Activated naive CD4-positive, alpha-beta T cell treated with anti-CD3 and anti-CD28 coated beads for 36 hours (primary cell): ENCODE measurements at regions of chr11 and their contacts with region 1.

Region 1: GRCh38 chr11:1837171-1838076 is 1.4 kb upstream of the TNNI2 start:
- DNase-seq: peak; percentile 77
- H3K4me3 Mint-ChIP-seq: no peak overlapping the region
- H3K27ac Mint-ChIP-seq: no peak overlapping the region
- H3K4me1 Mint-ChIP-seq: no peaks in the 10 kb centered on the region
- H3K27me3 Mint-ChIP-seq: no peaks in the 10 kb centered on the region

Region 2: DNA sequence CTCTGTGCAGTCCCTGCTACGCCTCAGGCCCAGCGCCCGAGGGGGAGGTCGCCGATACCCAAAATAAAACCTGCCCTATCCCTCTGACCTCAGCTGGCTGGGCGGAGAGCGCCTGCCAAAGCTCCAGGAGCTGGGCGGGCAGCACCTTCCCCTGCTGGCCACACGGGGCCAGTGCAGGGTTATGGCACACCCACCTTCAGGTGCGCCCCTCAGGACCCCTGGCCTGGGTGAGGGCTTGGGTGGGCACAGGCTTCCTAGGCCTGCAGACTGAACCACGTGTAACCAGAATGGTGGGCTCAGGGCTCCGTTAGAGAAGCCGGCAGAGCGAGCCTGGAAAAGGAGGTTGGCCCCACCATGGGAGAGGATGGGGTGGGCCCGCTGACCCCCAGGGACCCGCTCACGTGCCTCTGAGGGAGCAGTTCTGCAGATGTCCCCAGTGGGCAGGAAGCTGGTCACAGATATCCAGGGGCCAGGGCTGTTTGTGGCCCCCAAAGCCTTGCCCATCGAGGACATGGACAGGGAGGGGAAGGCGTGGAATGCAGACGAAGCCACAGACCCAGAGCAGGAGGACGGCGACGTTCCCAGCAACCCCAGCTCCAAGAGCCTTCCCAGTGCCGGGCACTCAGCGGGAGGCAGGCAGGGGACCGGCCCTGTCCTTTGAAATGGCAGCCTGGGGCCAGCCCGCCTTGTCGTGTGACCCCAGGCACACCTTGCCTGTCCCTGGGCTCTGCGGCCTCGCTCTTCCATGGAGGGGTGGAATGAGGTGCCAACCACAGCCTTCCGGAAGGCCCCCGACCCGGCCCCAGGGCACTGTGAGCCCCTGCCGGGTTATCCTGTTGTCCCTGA is 80.5 kb after region 1 on chr11:
- CTCF ChIA-PET with region 1: interaction called, 13 read pairs
- intact Hi-C with region 1: loop called (anchors 1 kb)
- DNase-seq: no peak
- H3K4me3 Mint-ChIP-seq: no peak overlapping the region
- H3K27ac Mint-ChIP-seq: no peak overlapping the region
- H3K4me1 Mint-ChIP-seq: peaks cover 11% of the 10 kb centered on the region
- H3K27me3 Mint-ChIP-seq: peaks cover 3% of the 10 kb centered on the region

Region 3: DNA sequence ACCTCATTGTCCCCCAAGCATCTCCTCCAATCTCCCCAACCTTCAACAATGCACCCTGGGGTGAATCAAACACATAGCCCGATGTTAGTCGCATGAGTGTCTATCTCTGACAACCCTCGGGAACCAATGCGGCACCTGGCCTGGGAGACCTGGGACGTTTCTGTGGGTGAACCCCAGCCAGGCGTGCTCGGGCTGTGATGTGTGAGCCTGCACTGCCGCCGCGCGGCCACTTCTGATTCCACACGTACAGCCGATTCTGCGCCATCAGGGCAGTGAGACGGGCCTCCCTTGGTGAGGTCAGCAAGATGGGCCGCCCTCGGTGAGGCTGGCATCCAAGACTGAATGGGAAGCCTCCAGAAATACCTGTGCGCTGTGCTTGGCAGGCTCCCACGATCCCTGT is 165.4 kb after region 1 on chr11:
- CTCF ChIA-PET with region 1: interaction called, 49 read pairs
- intact Hi-C with region 1: no loop called
- DNase-seq: no peak
- H3K4me3 Mint-ChIP-seq: no peak overlapping the region
- H3K27ac Mint-ChIP-seq: no peak overlapping the region
- H3K4me1 Mint-ChIP-seq: no peaks in the 10 kb centered on the region
- H3K27me3 Mint-ChIP-seq: no peaks in the 10 kb centered on the region

Region 4: GRCh38 chr11:2137202-2138071 is 300.0 kb after region 1 on chr11:
- CTCF ChIA-PET with region 1: no interaction called
- intact Hi-C with region 1: no loop called
- DNase-seq: no peak
- H3K4me3 Mint-ChIP-seq: peak overlapping the region; percentile 15
- H3K27ac Mint-ChIP-seq: no peak overlapping the region
- H3K4me1 Mint-ChIP-seq: peaks cover 16% of the 10 kb centered on the region
- H3K27me3 Mint-ChIP-seq: peaks cover 57% of the 10 kb centered on the region